Panc1 (cell line): ENCODE measurements at regions of chr7 and their contacts with region 1.

Region 1: DNA sequence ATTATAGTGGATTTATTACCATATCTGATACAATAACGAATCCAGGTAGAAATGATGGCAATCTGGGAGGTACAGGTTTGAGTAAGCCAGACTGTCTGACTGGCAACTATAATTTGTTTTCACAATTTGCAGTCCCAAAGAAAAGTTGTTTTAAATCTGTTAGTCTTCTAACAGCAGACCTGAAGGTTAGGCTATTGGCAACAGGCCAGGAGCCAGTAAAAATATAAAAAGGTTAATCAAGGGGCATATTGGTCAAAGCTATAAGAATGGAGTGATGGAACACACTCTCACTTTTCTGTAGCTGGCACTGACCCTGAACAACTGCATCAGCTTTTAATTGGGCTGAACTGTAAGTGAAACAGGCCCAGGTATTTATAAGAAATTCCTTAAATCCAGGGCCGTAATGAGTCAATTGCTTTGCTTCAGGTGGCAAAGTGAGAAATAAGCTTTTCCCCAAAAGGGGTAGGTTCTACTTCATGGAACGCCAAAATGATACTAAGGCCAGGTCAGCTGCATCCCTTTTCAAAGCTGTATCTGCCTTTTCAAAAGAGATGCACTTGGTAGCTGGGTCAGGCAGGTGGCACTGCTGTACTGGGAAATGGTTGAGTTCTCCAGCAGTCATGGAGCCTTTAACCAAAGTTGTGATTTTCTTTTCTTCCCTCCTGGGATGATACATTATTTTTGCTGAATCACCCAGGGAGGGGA is 7.0 kb upstream of the GPR22 start:
- DNase-seq: peak; percentile 42
- ATAC-seq: peak; percentile 96
- H3K4me3 ChIP-seq: no peak overlapping the region
- H3K27ac ChIP-seq: no peak overlapping the region
- H3K4me1 ChIP-seq: no peaks in the 10 kb centered on the region
- H3K27me3 ChIP-seq: no peaks in the 10 kb centered on the region
- CTCF ChIP-seq: peak; percentile 82

Region 2: DNA sequence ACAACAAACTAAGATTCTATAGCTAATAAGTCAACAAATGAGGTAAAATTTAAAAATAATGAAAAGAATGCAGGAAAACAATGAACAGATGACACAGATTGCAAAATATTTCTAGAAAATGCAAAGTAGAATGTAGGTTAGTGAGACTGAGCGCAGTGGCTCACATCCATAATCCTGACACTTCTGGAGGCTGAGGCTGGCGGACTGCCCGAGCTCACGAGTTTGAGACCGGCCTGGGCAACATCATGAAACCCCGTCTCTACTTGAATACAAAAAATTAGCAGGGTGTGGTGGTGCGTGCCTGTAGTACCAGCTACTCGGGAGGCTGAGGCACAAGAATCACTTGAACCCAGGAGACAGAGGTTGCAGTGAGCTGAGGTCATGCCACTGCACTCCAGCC is 39.0 kb before region 1 on chr7:
- CTCF ChIA-PET with region 1: no interaction called
- POLR2A ChIA-PET with region 1: no interaction called
- in situ Hi-C with region 1: no loop called
- intact Hi-C with region 1: no loop called
- DNase-seq: no peak
- ATAC-seq: no peak
- H3K4me3 ChIP-seq: no peak overlapping the region
- H3K27ac ChIP-seq: no peak overlapping the region
- H3K4me1 ChIP-seq: no peaks in the 10 kb centered on the region
- H3K27me3 ChIP-seq: no peaks in the 10 kb centered on the region
- CTCF ChIP-seq: no peak

Region 3: DNA sequence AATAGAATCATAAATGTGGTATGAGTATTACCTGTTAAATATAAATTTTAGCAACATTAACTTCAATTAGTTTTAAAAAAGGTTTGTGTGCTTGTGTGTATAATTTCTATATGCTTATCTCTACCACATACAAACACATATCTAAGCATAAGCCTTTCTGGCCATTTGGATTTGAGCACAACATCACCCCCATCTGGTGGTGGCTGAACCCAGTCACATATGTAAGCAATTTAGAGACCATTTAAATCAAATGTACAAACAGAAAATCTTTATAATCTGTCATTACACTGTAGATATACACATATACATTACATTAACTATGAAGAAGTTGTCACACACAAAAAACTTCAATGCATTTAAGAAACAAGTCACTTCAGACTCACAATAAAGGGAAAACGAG is 38.7 kb after region 1 on chr7:
- CTCF ChIA-PET with region 1: no interaction called
- POLR2A ChIA-PET with region 1: no interaction called
- in situ Hi-C with region 1: no loop called
- intact Hi-C with region 1: loop called (anchors 5 kb)
- DNase-seq: peak; percentile 48
- ATAC-seq: no peak
- H3K4me3 ChIP-seq: no peak overlapping the region
- H3K27ac ChIP-seq: no peak overlapping the region
- H3K4me1 ChIP-seq: no peaks in the 10 kb centered on the region
- H3K27me3 ChIP-seq: no peaks in the 10 kb centered on the region
- CTCF ChIP-seq: peak; percentile 56; the same call in 1 of the 2 replicates

Region 4: GRCh38 chr7:107725151-107725740 is 262.4 kb after region 1 on chr7:
- CTCF ChIA-PET with region 1: interaction called, 3 read pairs
- POLR2A ChIA-PET with region 1: no interaction called
- in situ Hi-C with region 1: no loop called
- intact Hi-C with region 1: loop called (anchors 1 kb)
- DNase-seq: peak; percentile 32
- ATAC-seq: peak; percentile 56; the same call in 1 of the 2 replicates
- H3K4me3 ChIP-seq: no peak overlapping the region
- H3K27ac ChIP-seq: no peak overlapping the region
- H3K4me1 ChIP-seq: no peaks in the 10 kb centered on the region
- H3K27me3 ChIP-seq: peaks cover 9% of the 10 kb centered on the region; the same call in 1 of the 2 replicates
- CTCF ChIP-seq: peak; percentile 74

Region 5: GRCh38 chr7:107879400-107880035 is 416.6 kb after region 1 on chr7:
- CTCF ChIA-PET with region 1: no interaction called
- POLR2A ChIA-PET with region 1: interaction called, 5 read pairs
- in situ Hi-C with region 1: no loop called
- intact Hi-C with region 1: loop called (anchors 5 kb)
- DNase-seq: peak; percentile 56
- ATAC-seq: peak; percentile 90
- H3K4me3 ChIP-seq: no peak overlapping the region
- H3K27ac ChIP-seq: no peak overlapping the region
- H3K4me1 ChIP-seq: peaks cover 3% of the 10 kb centered on the region; the same call in 1 of the 2 replicates
- H3K27me3 ChIP-seq: peaks cover 2% of the 10 kb centered on the region; the same call in 1 of the 2 replicates
- CTCF ChIP-seq: peak; percentile 82; the same call in 1 of the 2 replicates